CD4-positive, alpha-beta memory T cell (primary cell): ENCODE measurements at regions of chr17 and their contacts with region 1.

Region 1: GRCh38 chr17:41322094-41322902 is 6.8 kb upstream of the KRTAP17-1 start:
- DNase-seq: peak; percentile 39 to 65 (median 61)
- H3K4me3 ChIP-seq: no peak overlapping the region
- H3K4me3 Mint-ChIP-seq: peak overlapping the region in 1 of 8 donors; percentile 67
- H3K27ac ChIP-seq: no peak overlapping the region
- H3K27ac Mint-ChIP-seq: peak overlapping the region; percentile 85 to 92 (median 85)
- H3K4me1 ChIP-seq: peaks cover 52% of the 10 kb centered on the region
- H3K4me1 Mint-ChIP-seq: peaks cover 23 to 58% (median 45%) of the 10 kb centered on the region in 4 donors
- H3K27me3 ChIP-seq: no peaks in the 10 kb centered on the region
- H3K27me3 Mint-ChIP-seq: no peaks in the 10 kb centered on the region

Region 2: GRCh38 chr17:40854159-40854814 is 468.0 kb before region 1 on chr17:
- CTCF ChIA-PET with region 1: interaction called, 12 read pairs
- POLR2A ChIA-PET with region 1: no interaction called
- intact Hi-C with region 1: no loop called
- DNase-seq: no peak
- H3K4me3 ChIP-seq: no peak overlapping the region
- H3K4me3 Mint-ChIP-seq: no peak overlapping the region
- H3K27ac ChIP-seq: no peak overlapping the region
- H3K27ac Mint-ChIP-seq: no peak overlapping the region
- H3K4me1 ChIP-seq: no peaks in the 10 kb centered on the region
- H3K4me1 Mint-ChIP-seq: peaks cover 0 to 4% (median 2%) of the 10 kb centered on the region in 4 donors
- H3K27me3 ChIP-seq: no peaks in the 10 kb centered on the region
- H3K27me3 Mint-ChIP-seq: peaks cover 8 to 10% of the 10 kb centered on the region in 2 donors

Region 3: DNA sequence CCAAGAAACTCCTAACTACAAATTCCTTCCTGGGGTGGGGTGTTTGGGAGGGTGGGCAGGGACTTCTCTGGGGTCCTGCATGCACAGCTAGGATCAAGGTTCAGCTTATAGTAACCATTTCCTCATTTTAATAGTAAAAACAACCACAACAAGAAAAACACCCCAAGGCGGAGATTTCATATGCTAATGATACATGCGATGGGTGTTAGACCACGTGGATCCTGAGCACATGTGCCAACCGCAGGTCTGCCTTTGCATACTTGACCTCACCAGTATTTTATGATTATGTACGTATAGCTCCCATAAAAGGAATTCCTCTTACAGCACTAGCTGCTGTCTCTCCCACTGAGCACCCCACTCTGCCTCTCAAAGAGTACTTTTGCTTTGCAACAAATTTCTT is 206.0 kb before region 1 on chr17:
- CTCF ChIA-PET with region 1: interaction called, 21 read pairs
- POLR2A ChIA-PET with region 1: interaction called, 6 read pairs
- intact Hi-C with region 1: loop called (anchors 2 kb)
- DNase-seq: no peak
- H3K4me3 ChIP-seq: no peak overlapping the region
- H3K4me3 Mint-ChIP-seq: no peak overlapping the region
- H3K27ac ChIP-seq: no peak overlapping the region
- H3K27ac Mint-ChIP-seq: peak overlapping the region in 1 of 7 donors; percentile 79
- H3K4me1 ChIP-seq: peaks cover 15% of the 10 kb centered on the region
- H3K4me1 Mint-ChIP-seq: peaks cover 2 to 29% (median 16%) of the 10 kb centered on the region in 4 donors
- H3K27me3 ChIP-seq: no peaks in the 10 kb centered on the region
- H3K27me3 Mint-ChIP-seq: peaks cover 4% of the 10 kb centered on the region in 2 donors

Region 4: GRCh38 chr17:41171886-41172285 is 150.4 kb before region 1 on chr17:
- CTCF ChIA-PET with region 1: interaction called, 11 read pairs
- POLR2A ChIA-PET with region 1: no interaction called
- intact Hi-C with region 1: no loop called
- DNase-seq: no peak
- H3K4me3 ChIP-seq: no peak overlapping the region
- H3K4me3 Mint-ChIP-seq: no peak overlapping the region
- H3K27ac ChIP-seq: no peak overlapping the region
- H3K27ac Mint-ChIP-seq: no peak overlapping the region
- H3K4me1 ChIP-seq: no peaks in the 10 kb centered on the region
- H3K4me1 Mint-ChIP-seq: peaks cover 0 to 9% (median 4%) of the 10 kb centered on the region in 4 donors
- H3K27me3 ChIP-seq: no peaks in the 10 kb centered on the region
- H3K27me3 Mint-ChIP-seq: no peaks in the 10 kb centered on the region

Region 5: GRCh38 chr17:41308251-41308917 is 13.9 kb before region 1 on chr17:
- CTCF ChIA-PET with region 1: interaction called, 55 read pairs
- POLR2A ChIA-PET with region 1: interaction called, 59 read pairs
- intact Hi-C with region 1: no loop called
- DNase-seq: peak; percentile 88 to 95 (median 92)
- H3K4me3 ChIP-seq: peak overlapping the region in 1 of 2 donors; percentile 41
- H3K4me3 Mint-ChIP-seq: peak overlapping the region; percentile 65 to 82 (median 78)
- H3K27ac ChIP-seq: peak overlapping the region; percentile 62
- H3K27ac Mint-ChIP-seq: peak overlapping the region; percentile 96 to 98 (median 97)
- H3K4me1 ChIP-seq: peaks cover 59% of the 10 kb centered on the region
- H3K4me1 Mint-ChIP-seq: peaks cover 54 to 63% (median 58%) of the 10 kb centered on the region in 4 donors
- H3K27me3 ChIP-seq: no peaks in the 10 kb centered on the region
- H3K27me3 Mint-ChIP-seq: no peaks in the 10 kb centered on the region

Region 6: DNA sequence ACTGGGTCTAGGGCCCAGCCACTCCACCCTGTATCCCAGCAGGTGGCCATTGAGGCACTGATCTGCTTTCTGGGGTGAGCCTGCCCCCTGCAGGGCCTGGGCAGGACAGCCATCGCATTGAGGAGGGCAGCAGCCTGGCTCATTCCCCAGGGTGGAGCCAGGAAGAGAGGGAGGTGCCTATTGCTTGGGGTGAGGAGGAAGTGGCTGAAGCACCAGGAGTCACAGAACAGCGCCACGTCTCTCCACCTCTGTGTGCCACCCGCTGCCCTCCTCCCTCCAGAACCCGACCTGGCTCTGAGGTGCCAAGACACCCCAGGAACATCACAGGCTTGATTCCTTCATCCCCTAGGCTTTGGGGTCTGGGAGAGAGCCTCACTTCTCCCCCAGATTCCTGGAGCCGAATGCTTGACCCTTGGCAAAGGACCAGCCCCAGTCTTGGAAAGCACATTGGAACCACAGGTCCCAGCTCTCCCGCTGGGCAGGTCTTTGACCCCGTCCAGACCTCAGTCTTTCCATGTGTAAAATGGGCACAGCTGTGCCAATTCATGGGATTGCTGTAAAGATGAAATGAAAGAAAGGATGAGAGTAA is 174.6 kb after region 1 on chr17:
- CTCF ChIA-PET with region 1: interaction called, 4 read pairs
- POLR2A ChIA-PET with region 1: no interaction called
- intact Hi-C with region 1: loop called (anchors 5 kb)
- DNase-seq: peak; percentile 43 to 61 (median 56)
- H3K4me3 ChIP-seq: no peak overlapping the region
- H3K4me3 Mint-ChIP-seq: peak overlapping the region in 3 of 8 donors; percentile 42 to 64 (median 51)
- H3K27ac ChIP-seq: no peak overlapping the region
- H3K27ac Mint-ChIP-seq: peak overlapping the region in 4 of 7 donors; percentile 72 to 80 (median 75)
- H3K4me1 ChIP-seq: peaks cover 11% of the 10 kb centered on the region
- H3K4me1 Mint-ChIP-seq: peaks cover 7 to 36% (median 12%) of the 10 kb centered on the region in 4 donors
- H3K27me3 ChIP-seq: no peaks in the 10 kb centered on the region
- H3K27me3 Mint-ChIP-seq: no peaks in the 10 kb centered on the region